ENCODE measurements at regions of chr6 and their contacts with region 1.

Region 1: DNA sequence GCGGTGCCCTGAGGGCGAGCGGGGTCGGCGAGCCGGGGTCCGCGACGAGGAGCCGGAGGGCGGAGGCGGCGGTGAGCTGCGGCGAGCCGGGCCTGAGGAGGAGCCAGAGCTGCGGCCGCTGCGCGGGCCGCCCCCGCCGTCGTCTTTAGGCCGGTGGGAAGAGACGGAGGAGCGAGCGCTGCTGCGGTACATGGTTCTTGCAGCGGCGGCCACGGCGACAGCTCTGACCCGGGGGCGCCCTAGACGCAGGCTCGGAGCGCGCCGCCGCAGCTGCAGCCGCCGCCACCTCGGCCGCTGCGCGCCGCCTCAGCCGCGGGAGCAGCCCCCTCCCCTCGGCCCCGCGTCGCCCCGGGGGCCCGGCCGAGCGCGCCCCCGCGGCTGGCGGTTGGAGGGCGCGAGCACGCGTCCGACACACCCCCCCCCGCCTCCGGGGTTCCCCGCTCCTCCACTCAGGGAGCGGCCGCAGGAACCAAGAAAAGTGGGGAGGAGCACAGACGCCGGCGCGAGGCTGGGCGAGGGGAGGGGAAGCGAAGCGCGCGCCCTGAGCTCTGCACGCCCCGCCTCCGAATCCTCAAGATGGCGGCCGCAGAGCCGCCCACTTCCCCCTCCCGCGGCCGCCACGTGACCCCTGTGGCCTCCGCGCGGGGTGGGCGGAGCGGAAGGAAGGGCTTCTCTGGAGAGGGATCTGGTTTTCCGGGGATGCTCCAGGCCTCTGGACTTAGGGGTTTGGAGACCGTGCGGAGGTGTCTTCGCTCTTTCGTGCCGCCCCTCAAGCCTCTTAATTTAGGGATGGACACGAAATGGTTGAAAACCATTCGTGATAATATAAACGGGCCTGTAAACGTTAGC is at the start of gene ZNF318:
- H3K4me3 ChIP-seq: peak within 1 kb of the TSS; percentile 77
- H3K27ac ChIP-seq: peak within 1 kb of the TSS; percentile 93
- H3K4me1 ChIP-seq: peaks cover 7% of the 10 kb centered on the region
- CTCF ChIP-seq: no peak

Region 2: GRCh38 chr6:43328528-43328927 is 40.9 kb before region 1 on chr6:
- CTCF ChIA-PET with region 1: no interaction called
- POLR2A ChIA-PET with region 1: no interaction called
- H3K4me3 ChIP-seq: no peak overlapping the region
- H3K27ac ChIP-seq: no peak overlapping the region
- H3K4me1 ChIP-seq: no peaks in the 10 kb centered on the region
- CTCF ChIP-seq: no peak

Region 3: GRCh38 chr6:43355862-43356590 is 13.4 kb before region 1 on chr6:
- CTCF ChIA-PET with region 1: interaction called, 9 read pairs
- POLR2A ChIA-PET with region 1: interaction called, 11 read pairs
- H3K4me3 ChIP-seq: no peak overlapping the region
- H3K27ac ChIP-seq: no peak overlapping the region
- H3K4me1 ChIP-seq: no peaks in the 10 kb centered on the region
- CTCF ChIP-seq: peak; percentile 38; the same call in 1 of the 2 replicates

Region 4: DNA sequence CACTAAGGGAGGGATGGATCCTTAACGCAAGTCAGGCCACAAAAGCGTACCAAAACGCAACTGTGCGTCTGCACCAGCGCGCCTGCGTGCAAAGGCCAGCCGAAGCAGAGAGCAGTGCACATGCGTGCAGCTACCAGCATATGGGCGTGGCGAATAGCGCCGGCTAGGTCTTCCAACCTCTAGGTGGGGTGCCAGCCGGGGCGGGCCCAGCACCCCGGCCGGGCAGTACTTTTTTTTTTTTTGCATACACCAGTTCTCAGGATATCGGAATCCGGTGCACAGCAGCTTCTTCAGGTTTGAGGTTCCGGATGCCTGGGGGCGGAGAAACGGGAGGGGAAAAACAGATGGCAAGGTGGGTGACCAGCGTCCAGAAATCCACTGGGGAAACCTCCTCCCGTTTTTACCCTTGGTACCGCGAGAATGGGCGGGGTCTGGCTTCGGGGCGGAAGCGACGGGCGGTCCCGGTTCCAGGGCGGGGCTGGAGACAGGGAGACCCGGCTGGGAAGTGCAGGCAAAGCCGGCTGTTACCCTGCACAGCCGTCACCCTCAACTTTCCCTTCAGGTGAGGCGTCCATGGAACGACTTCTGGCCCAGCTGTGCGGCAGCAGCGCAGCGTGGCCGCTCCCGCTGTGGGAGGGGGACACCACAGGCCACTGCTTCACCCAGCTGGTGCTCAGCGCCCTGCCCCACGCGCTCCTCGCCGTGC is 58.2 kb after region 1 on chr6 and contains the start of gene ABCC10:
- CTCF ChIA-PET with region 1: interaction called, 3 read pairs
- POLR2A ChIA-PET with region 1: interaction called, 28 read pairs
- H3K4me3 ChIP-seq: peak within 1 kb of the TSS; percentile 92
- H3K27ac ChIP-seq: peak within 1 kb of the TSS; percentile 84
- H3K4me1 ChIP-seq: peaks cover 7% of the 10 kb centered on the region; the same call in 1 of the 2 replicates
- CTCF ChIP-seq: peak; percentile 87

Region 5: DNA sequence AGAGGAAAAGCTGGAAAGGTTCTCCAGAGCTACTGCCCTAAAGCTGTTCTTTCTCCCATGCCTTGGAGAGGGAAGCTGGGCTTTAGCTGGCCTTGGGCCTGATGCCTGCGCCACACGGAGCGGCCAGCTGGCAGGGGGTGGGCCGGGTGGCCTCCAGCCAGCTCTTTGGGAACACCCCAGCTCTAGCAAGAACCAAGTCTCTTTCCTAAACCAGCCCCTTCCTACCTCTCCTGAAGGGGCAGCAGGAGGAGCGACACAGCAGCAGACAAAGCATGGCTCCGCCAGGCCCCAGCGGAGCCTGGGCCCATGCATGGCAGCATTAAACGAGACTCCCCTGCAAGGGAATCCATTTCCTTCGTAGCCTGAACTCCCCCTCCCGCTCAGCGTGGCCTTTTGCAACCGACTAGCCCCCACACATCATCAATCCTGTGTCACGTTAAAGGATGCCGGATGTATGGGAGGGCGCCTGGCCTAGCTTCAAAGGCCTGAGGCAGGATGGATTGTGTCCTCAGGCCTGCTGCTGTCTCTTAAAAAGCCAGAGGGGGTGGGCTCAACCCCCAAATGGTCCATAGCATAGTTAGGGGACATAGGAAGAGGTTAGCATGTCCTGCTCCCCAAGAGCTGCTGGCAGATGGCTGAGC is 304.2 kb after region 1 on chr6:
- CTCF ChIA-PET with region 1: no interaction called
- POLR2A ChIA-PET with region 1: no interaction called
- H3K4me3 ChIP-seq: no peak overlapping the region
- H3K27ac ChIP-seq: no peak overlapping the region
- H3K4me1 ChIP-seq: no peaks in the 10 kb centered on the region; the same call in 1 of the 2 replicates
- CTCF ChIP-seq: no peak

Measured in HEK293 (cell line).